ENCODE measurements at regions of chr7 and their contacts with region 1.

Region 1: DNA sequence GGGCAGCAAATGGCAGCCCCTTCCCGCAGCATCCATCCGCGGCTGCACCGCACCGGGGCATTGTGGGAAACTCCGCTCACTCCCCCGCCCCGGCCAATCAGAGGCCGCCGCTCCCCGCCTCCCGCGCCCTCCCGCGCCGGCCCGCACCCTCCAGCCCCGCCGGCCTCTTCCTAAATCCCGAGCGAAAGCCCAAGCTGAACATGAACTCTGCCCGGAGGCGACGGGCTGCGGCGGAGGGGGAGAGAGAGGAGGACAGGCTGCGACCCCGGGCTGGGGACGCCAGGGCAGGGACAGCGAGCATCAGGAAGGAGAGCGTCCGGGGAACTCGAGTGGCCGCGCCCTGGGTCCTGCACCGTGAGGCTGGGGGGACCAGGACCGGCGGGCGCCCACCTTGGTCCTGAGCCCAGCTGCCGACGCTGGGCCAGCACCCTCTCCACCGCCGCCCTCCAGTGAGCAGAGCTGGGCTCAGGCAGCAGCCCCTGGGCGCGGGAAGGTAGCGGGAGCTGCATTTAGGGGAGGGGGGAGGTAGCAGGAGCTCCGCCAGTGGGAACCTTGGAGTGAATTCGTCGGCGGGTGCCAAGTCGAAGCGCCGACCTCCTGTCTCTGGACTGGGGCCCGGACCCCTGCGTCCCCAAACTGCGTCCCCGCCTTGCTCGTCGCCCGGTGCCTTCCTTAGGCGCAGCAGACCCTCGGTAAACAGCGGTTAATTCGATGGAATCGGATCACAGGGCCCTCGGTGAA is at the start of gene DGKI:
- DNase-seq: peak; percentile 11
- ATAC-seq: peak; percentile 47
- H3K4me3 Mint-ChIP-seq: peak within 1 kb of the TSS; percentile 32
- H3K27ac Mint-ChIP-seq: no peak within 1 kb of the TSS
- H3K4me1 Mint-ChIP-seq: peaks cover 6% of the 10 kb centered on the region
- H3K27me3 Mint-ChIP-seq: peaks cover 57% of the 10 kb centered on the region
- total RNA-seq, gene DGKI: 2.9 to 3.0 TPM

Region 2: DNA sequence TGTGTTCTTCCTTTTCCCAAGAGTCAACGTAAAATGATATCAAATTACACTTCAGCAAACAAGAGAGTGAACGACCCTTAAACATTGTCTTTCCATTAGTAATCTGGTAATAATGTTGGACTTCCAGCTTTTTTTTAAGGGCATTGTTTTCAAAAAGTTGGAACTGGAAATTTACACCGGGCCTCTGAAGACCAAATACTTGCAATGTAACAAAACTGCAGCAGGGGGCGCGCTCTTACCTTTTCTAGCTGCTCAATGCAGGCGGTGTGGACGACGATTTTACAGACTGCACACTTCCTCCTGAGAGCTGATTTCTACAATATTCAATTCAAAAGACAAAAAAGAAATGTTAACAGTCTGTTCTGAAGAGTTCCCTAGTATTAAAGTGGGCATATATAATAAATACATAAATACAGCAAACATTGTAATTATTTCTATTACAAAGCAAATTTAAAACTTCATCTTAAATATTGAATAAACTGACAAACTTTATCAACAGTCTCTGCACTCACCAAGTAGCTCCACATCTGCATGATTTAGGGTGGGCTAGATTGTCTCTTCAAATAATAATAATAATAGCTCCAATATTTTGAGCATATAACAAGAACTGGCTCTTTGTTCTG is 190.7 kb before region 1 on chr7:
- CTCF ChIA-PET with region 1: interaction called, 3 read pairs
- POLR2A ChIA-PET with region 1: no interaction called
- intact Hi-C with region 1: loop called in 1 of 2 experiments (anchors 5 kb)
- DNase-seq: peak; percentile 85
- ATAC-seq: peak; percentile 77
- H3K4me3 Mint-ChIP-seq: no peak overlapping the region
- H3K27ac Mint-ChIP-seq: no peak overlapping the region
- H3K4me1 Mint-ChIP-seq: no peaks in the 10 kb centered on the region
- H3K27me3 Mint-ChIP-seq: peaks cover 14% of the 10 kb centered on the region

Measured in activated CD4-positive, alpha-beta T cell treated with anti-CD3 and anti-CD28 coated beads for 36 hours (primary cell).